H1 (cell line): ENCODE measurements at regions of chr19 and their contacts with region 1.

Region 1: GRCh38 chr19:8252922-8253589 is 43.9 kb downstream of the CERS4 start:
- DNase-seq: peak; percentile 66 to 98
- H3K4me3 ChIP-seq: no peak overlapping the region
- H3K27ac ChIP-seq: no peak overlapping the region
- H3K4me1 ChIP-seq: peaks cover 0 to 2% (median 0%) of the 10 kb centered on the region in 4 experiments; a peak in 1 of 7 replicates
- H3K27me3 ChIP-seq: no peaks in the 10 kb centered on the region
- CTCF ChIP-seq: peak; percentile 95 to 98 (median 97)
- EP300 ChIP-seq: peak in 1 of 2 experiments; percentile 12; a peak in 1 of 3 replicates
- POLR2A ChIP-seq: no peak
- RAD21 ChIP-seq: peak; percentile 99 to 100

Region 2: GRCh38 chr19:8081569-8082550 is 171.2 kb before region 1 on chr19:
- CTCF ChIA-PET with region 1: no interaction called
- POLR2A ChIA-PET with region 1: no interaction called
- DNase-seq: no peak
- H3K4me3 ChIP-seq: no peak overlapping the region
- H3K27ac ChIP-seq: no peak overlapping the region
- H3K4me1 ChIP-seq: no peaks in the 10 kb centered on the region
- H3K27me3 ChIP-seq: no peaks in the 10 kb centered on the region
- CTCF ChIP-seq: no peak
- EP300 ChIP-seq: no peak
- POLR2A ChIP-seq: no peak
- RAD21 ChIP-seq: no peak

Region 3: DNA sequence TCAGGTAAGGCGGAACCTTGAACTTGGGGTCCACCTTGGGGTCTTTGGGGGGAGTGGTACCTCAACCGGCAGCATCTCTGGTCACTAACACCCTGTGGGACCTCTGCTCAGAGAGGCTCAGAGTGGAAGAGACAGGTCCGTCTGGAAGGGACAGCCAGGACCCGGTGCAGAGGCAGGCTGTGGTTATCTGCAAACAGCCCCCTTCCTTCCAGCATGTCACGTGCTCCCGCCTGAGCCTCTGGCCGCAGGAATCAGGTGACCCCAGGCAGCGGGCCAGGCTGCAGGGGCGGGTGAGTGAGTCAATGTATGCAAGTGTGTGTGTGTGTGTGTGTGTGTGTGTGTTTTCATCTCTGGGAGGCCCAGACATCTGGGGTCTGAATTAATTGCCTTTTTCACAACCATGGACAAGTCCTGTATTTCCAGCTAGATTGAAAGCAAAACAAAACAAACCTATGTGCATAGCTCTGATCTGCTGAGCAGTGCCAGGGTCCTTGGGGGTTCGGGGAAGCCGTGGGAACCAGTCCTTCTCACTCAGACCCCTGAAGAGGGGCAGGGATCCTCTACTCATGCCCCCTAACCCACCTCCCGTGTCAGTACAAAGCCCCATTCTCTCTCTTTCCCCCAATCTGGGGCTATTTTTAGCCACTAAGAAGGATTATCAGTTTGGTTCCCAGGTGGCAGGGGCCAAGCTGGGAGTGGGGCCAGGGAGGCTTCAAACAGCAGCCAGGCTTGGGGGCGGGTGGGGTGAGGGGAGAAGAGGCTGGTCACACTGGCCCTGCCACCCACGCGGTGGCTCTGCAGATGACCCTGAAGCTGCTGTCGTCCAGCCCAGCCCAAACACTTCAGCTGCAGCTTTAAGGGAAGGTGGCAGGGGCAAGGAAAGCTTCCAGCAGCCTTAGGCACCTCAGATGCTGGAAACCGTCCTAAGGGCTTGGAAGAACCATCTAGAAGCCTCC is 12.5 kb before region 1 on chr19:
- CTCF ChIA-PET with region 1: interaction called, 10 read pairs
- POLR2A ChIA-PET with region 1: interaction called, 15 read pairs
- DNase-seq: peak; percentile 51 to 62
- H3K4me3 ChIP-seq: peak overlapping the region in 1 of 4 experiments; percentile 5; a peak in 2 of 8 replicates
- H3K27ac ChIP-seq: 0 out of 2 replicates have a peak overlapping the region, but pooled peaks have one; percentile 43
- H3K4me1 ChIP-seq: peaks cover 0 to 17% (median 6%) of the 10 kb centered on the region in 4 experiments; a peak in 4 of 7 replicates
- H3K27me3 ChIP-seq: no peaks in the 10 kb centered on the region
- CTCF ChIP-seq: no peak
- EP300 ChIP-seq: no peak
- POLR2A ChIP-seq: 0 out of 3 replicates have a peak, but pooled peaks of 1 of the 2 experiments have one; percentile 15
- RAD21 ChIP-seq: no peak

Region 4: DNA sequence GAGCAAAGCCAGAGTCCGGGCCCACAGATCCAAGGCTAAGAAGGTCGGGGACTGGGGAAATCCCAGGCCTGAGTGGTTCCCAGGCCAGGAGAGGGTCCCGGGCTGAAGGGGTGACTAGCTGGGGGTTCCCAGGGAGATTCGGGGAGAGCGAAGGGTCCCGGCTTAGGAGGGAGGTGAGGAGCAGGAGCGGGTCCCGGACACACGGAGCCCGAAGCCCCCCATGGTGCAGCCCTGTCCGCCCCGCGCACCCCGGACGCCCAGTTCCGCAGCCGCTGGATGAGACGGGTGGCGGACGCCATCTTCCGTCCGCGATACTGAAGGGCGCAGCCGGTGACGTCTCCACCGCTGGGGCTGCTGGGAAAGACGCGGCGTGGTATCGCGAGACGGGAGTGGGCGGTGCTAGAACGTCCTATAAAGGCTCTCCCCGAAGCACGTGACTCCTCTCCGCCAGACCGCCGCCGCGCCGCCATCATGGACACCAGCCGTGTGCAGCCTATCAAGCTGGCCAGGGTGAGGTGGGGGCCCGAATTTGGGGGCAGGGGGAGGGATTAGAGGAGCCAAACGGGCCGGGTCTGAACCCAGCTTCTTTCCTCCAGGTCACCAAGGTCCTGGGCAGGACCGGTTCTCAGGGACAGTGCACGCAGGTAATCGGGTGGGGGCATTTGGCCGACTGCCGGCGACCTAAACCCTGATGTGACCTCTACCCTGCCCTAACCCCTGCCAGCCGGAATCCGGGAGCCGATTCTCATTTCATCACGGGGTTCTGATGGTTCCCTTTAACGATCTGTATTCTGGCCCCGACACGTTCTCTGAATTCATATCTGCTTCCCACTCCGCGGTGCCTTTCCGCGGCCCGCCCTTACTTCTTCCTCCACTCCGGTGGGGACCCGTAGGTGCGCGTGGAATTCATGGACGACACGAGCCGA is 68.3 kb after region 1 on chr19 and contains the starts of genes NDUFA7 and RPS28:
- CTCF ChIA-PET with region 1: no interaction called
- POLR2A ChIA-PET with region 1: no interaction called
- DNase-seq: peak; percentile 87 to 99
- H3K4me3 ChIP-seq: peak within 1 kb of the TSS; percentile 90 to 98 (median 97)
- H3K27ac ChIP-seq: peak within 1 kb of the TSS; percentile 91
- H3K4me1 ChIP-seq: peaks cover 0 to 17% (median 9%) of the 10 kb centered on the region in 4 experiments; a peak in 6 of 7 replicates
- H3K27me3 ChIP-seq: no peaks in the 10 kb centered on the region
- CTCF ChIP-seq: peak in 1 of 3 experiments; percentile 18; a peak in 1 of 4 replicates
- EP300 ChIP-seq: 0 out of 3 replicates have a peak, but pooled peaks of 1 of the 2 experiments have one; percentile 50
- POLR2A ChIP-seq: peak; percentile 83 to 98
- RAD21 ChIP-seq: peak; percentile 19 to 41; a peak in 2 of 4 replicates
- total RNA-seq, gene NDUFA7: 51.6 and 54.4 TPM in 2 replicates
- total RNA-seq, gene RPS28: 1,699 and 1,856 TPM in 2 replicates